HCT116 (cell line): ENCODE measurements at regions of chr3 and their contacts with region 1.

Region 1: DNA sequence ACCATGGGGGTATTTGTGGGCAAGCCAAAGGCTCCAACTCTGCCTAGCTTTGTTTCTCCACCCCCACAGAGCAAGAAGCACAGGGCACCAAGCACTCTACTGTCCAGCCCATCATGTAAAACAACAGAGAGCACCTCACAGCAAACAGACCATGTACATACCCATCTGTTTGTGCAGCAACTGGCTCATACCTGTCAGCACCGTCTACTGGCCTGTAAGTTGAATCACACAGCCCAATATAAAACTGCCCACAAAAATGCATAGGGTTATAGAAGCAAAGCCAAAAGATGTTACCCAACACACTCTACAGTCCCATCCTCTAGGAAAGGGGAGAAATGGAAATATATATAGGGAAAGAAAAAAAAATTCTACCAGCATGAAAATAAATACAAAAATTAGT is 139.7 kb upstream of the CPNE4 start:
- DNase-seq: no peak
- ATAC-seq: no peak
- H3K4me3 ChIP-seq: no peak overlapping the region
- H3K27ac ChIP-seq: no peak overlapping the region
- H3K4me1 ChIP-seq: no peaks in the 10 kb centered on the region
- H3K27me3 ChIP-seq: peaks cover 40% of the 10 kb centered on the region
- CTCF ChIP-seq: no peak
- POLR2A ChIP-seq: no peak
- RAD21 ChIP-seq: no peak

Region 2: GRCh38 chr3:131723343-131723742 is 451.2 kb before region 1 on chr3:
- CTCF ChIA-PET with region 1: no interaction called
- POLR2A ChIA-PET with region 1: no interaction called
- RAD21 ChIA-PET with region 1: no interaction called
- intact Hi-C with region 1: no loop called
- DNase-seq: no peak
- ATAC-seq: no peak
- H3K4me3 ChIP-seq: no peak overlapping the region
- H3K27ac ChIP-seq: no peak overlapping the region
- H3K4me1 ChIP-seq: no peaks in the 10 kb centered on the region
- H3K27me3 ChIP-seq: peaks cover 39% of the 10 kb centered on the region
- CTCF ChIP-seq: no peak
- POLR2A ChIP-seq: no peak
- RAD21 ChIP-seq: no peak

Region 3: DNA sequence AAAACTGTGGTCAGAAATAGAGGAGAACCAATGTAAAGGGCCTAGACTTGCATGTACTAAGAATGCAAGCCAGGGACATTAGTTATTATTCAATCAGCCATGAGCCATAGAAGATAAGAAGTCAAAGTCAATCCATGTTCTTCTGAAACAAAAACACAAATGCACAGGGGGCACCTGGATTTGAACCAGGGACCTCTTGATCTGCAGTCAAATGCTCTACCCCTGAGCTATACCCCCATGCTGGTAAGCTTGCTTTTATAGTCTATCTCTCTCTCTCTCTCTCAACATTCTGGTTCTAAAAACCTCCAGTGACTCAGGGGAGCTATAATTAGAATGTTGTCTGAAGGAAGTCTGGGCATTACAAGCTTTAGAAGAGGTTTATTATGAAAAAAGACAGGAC is 57.1 kb after region 1 on chr3:
- CTCF ChIA-PET with region 1: no interaction called
- POLR2A ChIA-PET with region 1: no interaction called
- RAD21 ChIA-PET with region 1: no interaction called
- intact Hi-C with region 1: loop called (anchors 10 kb)
- DNase-seq: peak; percentile 22
- ATAC-seq: peak; percentile 42; the same call in 1 of the 2 replicates
- H3K4me3 ChIP-seq: no peak overlapping the region
- H3K27ac ChIP-seq: no peak overlapping the region
- H3K4me1 ChIP-seq: no peaks in the 10 kb centered on the region
- H3K27me3 ChIP-seq: no peaks in the 10 kb centered on the region
- CTCF ChIP-seq: no peak
- POLR2A ChIP-seq: no peak
- RAD21 ChIP-seq: no peak